Posterior cingulate gyrus (tissue), 11 donors: ENCODE measurements at regions of chr4 and their contacts with region 1.

Region 1: DNA sequence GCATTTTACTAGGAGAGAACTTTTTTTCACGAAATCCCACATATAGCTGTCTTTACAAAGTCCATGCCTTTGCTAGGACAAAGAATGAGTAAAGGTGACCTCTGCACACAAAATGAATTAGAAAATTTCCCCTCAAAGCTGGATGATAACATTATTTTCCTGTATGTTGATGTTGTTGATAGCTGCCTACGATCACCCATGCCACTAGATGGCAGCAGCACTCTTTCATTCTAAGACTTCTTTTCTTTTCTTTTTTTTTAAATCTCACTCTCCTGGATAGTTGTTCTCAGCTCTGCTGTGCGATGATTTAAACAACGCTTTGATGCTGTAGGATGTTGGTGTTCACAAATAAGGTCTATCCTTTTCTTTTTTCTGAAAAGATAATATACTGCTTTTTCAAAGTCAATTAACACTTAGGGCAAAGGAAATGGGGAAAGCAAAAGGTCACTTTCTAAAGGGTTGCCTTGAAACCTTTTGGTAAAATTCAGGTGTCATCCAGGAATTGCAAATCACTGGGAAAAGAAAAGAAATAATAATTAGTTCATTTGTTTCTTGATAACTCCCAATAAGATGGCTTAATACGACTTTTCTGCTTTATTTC is 266.8 kb downstream of the C4orf33 start:
- DNase-seq: peak in 6 of 10 donors; percentile 25 to 79 (median 34)

Region 2: DNA sequence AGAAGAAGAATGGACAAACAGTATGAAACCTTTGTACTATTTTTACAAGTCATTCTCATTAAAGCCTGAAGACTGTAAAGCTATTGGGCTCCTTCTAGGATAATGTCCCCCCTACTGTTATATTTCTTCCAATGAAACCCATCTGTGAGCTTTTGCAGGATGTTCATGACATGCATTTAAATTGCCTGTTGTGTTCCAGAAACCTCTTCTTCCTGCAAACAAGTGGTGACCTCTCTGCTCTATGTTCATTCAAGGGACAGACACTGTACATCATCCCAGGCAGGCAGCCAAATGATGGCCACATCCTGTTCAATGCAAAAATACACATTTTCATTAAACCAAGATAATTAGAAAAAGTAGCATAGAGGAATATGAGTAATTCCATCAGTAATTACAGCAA is 138.8 kb before region 1 on chr4:
- intact Hi-C with region 1: no loop called
- DNase-seq: no peak

Region 3: DNA sequence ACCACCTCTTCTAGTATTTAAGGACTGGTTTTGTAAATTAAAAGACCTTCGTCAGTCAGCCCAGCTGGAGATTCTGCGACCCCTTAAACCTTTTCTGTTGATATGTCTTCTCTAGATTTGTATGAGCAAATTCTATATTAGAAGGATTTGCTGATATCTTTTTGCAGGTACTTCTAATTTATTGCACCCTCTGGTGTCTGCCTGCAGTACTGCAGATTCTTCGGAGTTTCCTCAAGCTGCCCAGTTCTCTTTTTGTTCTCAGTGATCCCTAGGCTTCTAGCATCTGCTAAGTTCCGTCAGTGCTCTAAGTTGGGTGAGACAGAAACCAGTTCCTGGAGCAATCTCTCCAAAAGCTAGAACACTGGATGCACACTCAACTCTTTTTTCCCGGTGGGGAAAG is 278.4 kb after region 1 on chr4:
- intact Hi-C with region 1: loop called (anchors 2 kb)
- DNase-seq: peak in 4 of 10 donors; percentile 33 to 60 (median 51)